ENCODE measurements at regions of chr7 and their contacts with region 1.

Region 1: GRCh38 chr7:39948956-39949928 is 814 bp upstream of the CDK13 start:
- DNase-seq: peak; percentile 91 to 100 (median 99)
- ATAC-seq: peak; percentile 85
- H3K4me3 ChIP-seq: peak overlapping the region; percentile 58
- H3K4me3 Mint-ChIP-seq: peak overlapping the region; percentile 90 to 100 (median 96)
- H3K27ac ChIP-seq: peak overlapping the region; percentile 99
- H3K27ac Mint-ChIP-seq: peak overlapping the region; percentile 98 to 100 (median 99)
- H3K4me1 ChIP-seq: peaks cover 21% of the 10 kb centered on the region in 2 donors
- H3K4me1 Mint-ChIP-seq: peaks cover 22 to 48% (median 37%) of the 10 kb centered on the region in 7 donors
- H3K27me3 ChIP-seq: no peaks in the 10 kb centered on the region
- H3K27me3 Mint-ChIP-seq: peaks cover 0 to 10% (median 0%) of the 10 kb centered on the region in 5 donors

Region 2: GRCh38 chr7:38178004-38178694 is 1771.1 kb before region 1 on chr7 and contains the start of gene STARD3NL:
- CTCF ChIA-PET with region 1: no interaction called
- POLR2A ChIA-PET with region 1: no interaction called
- intact Hi-C with region 1: loop called in 1 of 2 experiments (anchors 1 kb)
- DNase-seq: peak; percentile 68 to 97 (median 88)
- ATAC-seq: peak; percentile 97
- H3K4me3 ChIP-seq: peak within 1 kb of the TSS; percentile 96
- H3K4me3 Mint-ChIP-seq: peak within 1 kb of the TSS; percentile 94 to 100 (median 99)
- H3K27ac ChIP-seq: peak within 1 kb of the TSS; percentile 84
- H3K27ac Mint-ChIP-seq: peak within 1 kb of the TSS; percentile 66 to 98 (median 97)
- H3K4me1 ChIP-seq: peaks cover 17 to 23% of the 10 kb centered on the region in 2 donors
- H3K4me1 Mint-ChIP-seq: peaks cover 21 to 50% (median 45%) of the 10 kb centered on the region in 7 donors
- H3K27me3 ChIP-seq: no peaks in the 10 kb centered on the region
- H3K27me3 Mint-ChIP-seq: peaks cover 3 to 14% (median 10%) of the 10 kb centered on the region in 5 donors
- total RNA-seq, gene STARD3NL: 9.4 to 22.0 (median 12.2) TPM

Region 3: GRCh38 chr7:39566023-39566921 is 383.0 kb before region 1 on chr7 and contains the start of gene YAE1:
- CTCF ChIA-PET with region 1: no interaction called
- POLR2A ChIA-PET with region 1: no interaction called
- intact Hi-C with region 1: loop called (anchors 1 to 5 kb)
- DNase-seq: peak; percentile 63 to 81 (median 75)
- ATAC-seq: peak; percentile 95
- H3K4me3 ChIP-seq: peak within 1 kb of the TSS; percentile 88
- H3K4me3 Mint-ChIP-seq: peak within 1 kb of the TSS; percentile 98 to 100 (median 99)
- H3K27ac ChIP-seq: peak within 1 kb of the TSS; percentile 81
- H3K27ac Mint-ChIP-seq: peak within 1 kb of the TSS; percentile 93 to 99 (median 96)
- H3K4me1 ChIP-seq: peaks cover 7 to 11% of the 10 kb centered on the region in 2 donors
- H3K4me1 Mint-ChIP-seq: peaks cover 13 to 50% (median 25%) of the 10 kb centered on the region in 7 donors
- H3K27me3 ChIP-seq: no peaks in the 10 kb centered on the region
- H3K27me3 Mint-ChIP-seq: peaks cover 0 to 15% (median 0%) of the 10 kb centered on the region in 5 donors
- total RNA-seq, gene YAE1: 10.2 to 34.2 (median 15.3) TPM

Region 4: DNA sequence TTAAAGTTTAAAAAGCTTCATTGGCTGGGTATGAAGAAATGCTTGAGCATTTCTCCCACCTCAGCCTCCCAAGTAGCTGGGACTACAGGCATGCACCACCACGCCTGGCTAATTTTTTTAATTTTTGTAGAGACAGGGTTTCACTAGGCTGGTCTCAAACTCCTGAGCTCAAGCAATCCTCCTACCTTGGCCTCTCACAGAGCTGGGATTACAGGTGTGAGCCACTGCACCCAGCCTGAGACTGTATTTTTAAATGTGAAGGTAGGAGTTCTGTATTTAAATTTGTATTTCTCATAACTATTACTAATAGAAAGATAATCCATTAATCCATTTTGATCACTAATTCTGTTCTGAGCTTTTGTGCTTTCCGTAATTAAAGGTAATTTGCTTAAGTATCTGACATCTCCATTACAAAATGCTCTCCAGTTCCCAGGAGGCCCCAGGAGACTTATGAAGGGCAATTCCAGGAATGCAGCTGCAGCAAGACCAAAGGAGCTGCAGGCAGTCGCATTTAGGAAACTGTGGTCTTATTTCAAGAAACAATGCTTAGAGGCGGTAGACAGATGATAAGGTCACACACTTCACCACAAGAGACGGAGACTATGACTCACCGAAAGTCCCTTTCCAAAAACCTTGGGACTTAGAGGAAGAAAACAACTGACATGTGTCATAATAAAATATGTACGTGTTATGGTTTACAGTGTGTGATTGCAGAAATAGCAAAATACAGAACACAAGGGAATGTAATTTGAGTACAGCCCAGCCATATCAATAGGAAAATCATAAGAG is 359.7 kb before region 1 on chr7:
- CTCF ChIA-PET with region 1: no interaction called
- POLR2A ChIA-PET with region 1: interaction called, 7 read pairs
- intact Hi-C with region 1: loop called in 1 of 2 experiments (anchors 1 kb)
- DNase-seq: peak in 8 of 9 donors; percentile 37 to 85 (median 60)
- ATAC-seq: peak; percentile 94
- H3K4me3 ChIP-seq: no peak overlapping the region
- H3K4me3 Mint-ChIP-seq: peak overlapping the region in 6 of 10 donors; percentile 19 to 78 (median 52)
- H3K27ac ChIP-seq: no peak overlapping the region
- H3K27ac Mint-ChIP-seq: peak overlapping the region in 8 of 9 donors; percentile 55 to 90 (median 77)
- H3K4me1 ChIP-seq: peaks cover 5 to 15% of the 10 kb centered on the region in 2 donors
- H3K4me1 Mint-ChIP-seq: peaks cover 10 to 54% (median 26%) of the 10 kb centered on the region in 7 donors
- H3K27me3 ChIP-seq: no peaks in the 10 kb centered on the region
- H3K27me3 Mint-ChIP-seq: no peaks in the 10 kb centered on the region

Region 5: GRCh38 chr7:39894904-39895303 is 54.3 kb before region 1 on chr7:
- CTCF ChIA-PET with region 1: interaction called, 12 read pairs
- POLR2A ChIA-PET with region 1: interaction called, 7 read pairs
- intact Hi-C with region 1: loop called (anchors 1 kb)
- DNase-seq: no peak
- ATAC-seq: no peak
- H3K4me3 ChIP-seq: no peak overlapping the region
- H3K4me3 Mint-ChIP-seq: no peak overlapping the region
- H3K27ac ChIP-seq: no peak overlapping the region
- H3K27ac Mint-ChIP-seq: no peak overlapping the region
- H3K4me1 ChIP-seq: no peaks in the 10 kb centered on the region
- H3K4me1 Mint-ChIP-seq: peaks cover 0 to 3% (median 0%) of the 10 kb centered on the region in 7 donors
- H3K27me3 ChIP-seq: no peaks in the 10 kb centered on the region
- H3K27me3 Mint-ChIP-seq: peaks cover 0 to 15% (median 4%) of the 10 kb centered on the region in 5 donors

Region 6: GRCh38 chr7:39987476-39988347 is 38.5 kb after region 1 on chr7:
- CTCF ChIA-PET with region 1: interaction called, 4 read pairs
- POLR2A ChIA-PET with region 1: interaction called, 19 read pairs
- intact Hi-C with region 1: loop called (anchors 1 to 5 kb)
- DNase-seq: peak in 7 of 9 donors; percentile 62 to 83 (median 76)
- ATAC-seq: peak; percentile 86
- H3K4me3 ChIP-seq: no peak overlapping the region
- H3K4me3 Mint-ChIP-seq: peak overlapping the region in 9 of 10 donors; percentile 19 to 68 (median 49)
- H3K27ac ChIP-seq: peak overlapping the region; percentile 46
- H3K27ac Mint-ChIP-seq: peak overlapping the region; percentile 15 to 93 (median 84)
- H3K4me1 ChIP-seq: peaks cover 4 to 28% of the 10 kb centered on the region in 2 donors
- H3K4me1 Mint-ChIP-seq: peaks cover 33 to 75% (median 56%) of the 10 kb centered on the region in 7 donors
- H3K27me3 ChIP-seq: no peaks in the 10 kb centered on the region
- H3K27me3 Mint-ChIP-seq: no peaks in the 10 kb centered on the region

Region 7: DNA sequence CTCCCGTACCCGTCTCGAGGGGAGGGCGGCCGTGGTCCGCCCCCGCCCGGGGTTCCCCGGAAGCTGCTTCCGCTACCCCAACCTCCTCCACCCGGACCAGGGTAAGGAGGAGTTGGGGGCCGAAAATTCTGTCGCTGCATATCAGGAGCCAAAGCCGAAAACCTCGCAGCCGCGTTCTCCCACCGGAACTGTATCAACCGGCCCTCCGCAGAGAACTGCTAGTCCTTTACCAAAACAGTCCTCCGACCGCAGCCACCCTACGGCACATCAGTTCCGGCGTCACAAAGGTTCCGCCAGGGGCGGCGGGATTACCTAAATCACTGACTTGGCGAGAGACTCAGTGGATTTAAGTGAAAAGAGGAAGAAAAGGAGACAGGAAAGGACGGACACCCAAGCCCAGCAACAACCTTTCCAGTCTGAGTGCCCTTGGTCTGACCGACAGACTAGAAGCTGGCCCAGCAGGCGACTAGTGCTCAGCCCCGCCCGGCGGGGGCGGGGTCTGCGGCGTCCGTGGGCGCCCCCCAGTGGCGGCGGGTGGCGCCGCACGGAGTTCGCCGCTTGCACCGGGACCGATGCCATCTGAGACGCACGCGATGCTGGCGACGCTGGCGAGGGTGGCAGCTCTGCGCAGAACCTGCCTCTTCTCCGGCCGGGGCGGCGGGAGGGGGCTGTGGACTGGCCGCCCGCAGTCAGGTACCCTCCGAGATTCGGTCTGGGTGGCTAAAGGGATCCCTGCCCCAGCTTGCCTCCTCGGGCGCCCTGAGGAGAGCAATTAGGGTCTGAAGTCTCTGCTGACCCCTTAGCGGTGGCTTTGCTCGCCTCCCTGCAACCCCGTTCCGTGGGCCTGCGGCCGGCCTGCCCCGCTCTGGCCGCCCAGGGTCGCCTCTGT is 185.4 kb after region 1 on chr7 and contains the starts of genes MPLKIP and SUGCT:
- CTCF ChIA-PET with region 1: no interaction called
- POLR2A ChIA-PET with region 1: interaction called, 37 read pairs
- intact Hi-C with region 1: loop called (anchors 1 kb)
- DNase-seq: peak; percentile 81 to 95 (median 91)
- ATAC-seq: peak; percentile 97
- H3K4me3 ChIP-seq: peak within 1 kb of the TSS; percentile 100
- H3K4me3 Mint-ChIP-seq: peak within 1 kb of the TSS; percentile 86 to 99 (median 97)
- H3K27ac ChIP-seq: peak within 1 kb of the TSS; percentile 92
- H3K27ac Mint-ChIP-seq: peak within 1 kb of the TSS; percentile 92 to 98 (median 97)
- H3K4me1 ChIP-seq: peaks cover 21 to 31% of the 10 kb centered on the region in 2 donors
- H3K4me1 Mint-ChIP-seq: peaks cover 15 to 44% (median 31%) of the 10 kb centered on the region in 7 donors
- H3K27me3 ChIP-seq: no peaks in the 10 kb centered on the region
- H3K27me3 Mint-ChIP-seq: peaks cover 0 to 17% (median 0%) of the 10 kb centered on the region in 5 donors
- total RNA-seq, gene MPLKIP: 17.2 to 40.1 (median 33.5) TPM
- total RNA-seq, gene SUGCT: 2.2 to 2.7 (median 2.4) TPM in 4 of 5 experiments, not detected in the other

Region 8: GRCh38 chr7:40186586-40186985 is 237.3 kb after region 1 on chr7:
- CTCF ChIA-PET with region 1: no interaction called
- POLR2A ChIA-PET with region 1: no interaction called
- intact Hi-C with region 1: no loop called
- DNase-seq: no peak
- ATAC-seq: no peak
- H3K4me3 ChIP-seq: no peak overlapping the region
- H3K4me3 Mint-ChIP-seq: no peak overlapping the region
- H3K27ac ChIP-seq: no peak overlapping the region
- H3K27ac Mint-ChIP-seq: no peak overlapping the region
- H3K4me1 ChIP-seq: no peaks in the 10 kb centered on the region
- H3K4me1 Mint-ChIP-seq: no peaks in the 10 kb centered on the region
- H3K27me3 ChIP-seq: no peaks in the 10 kb centered on the region
- H3K27me3 Mint-ChIP-seq: no peaks in the 10 kb centered on the region

Measured in naive thymus-derived CD4-positive, alpha-beta T cell (primary cell).